Left cardiac atrium (tissue), 4 donors: ENCODE measurements at regions of chr12 and their contacts with region 1.

Region 1: DNA sequence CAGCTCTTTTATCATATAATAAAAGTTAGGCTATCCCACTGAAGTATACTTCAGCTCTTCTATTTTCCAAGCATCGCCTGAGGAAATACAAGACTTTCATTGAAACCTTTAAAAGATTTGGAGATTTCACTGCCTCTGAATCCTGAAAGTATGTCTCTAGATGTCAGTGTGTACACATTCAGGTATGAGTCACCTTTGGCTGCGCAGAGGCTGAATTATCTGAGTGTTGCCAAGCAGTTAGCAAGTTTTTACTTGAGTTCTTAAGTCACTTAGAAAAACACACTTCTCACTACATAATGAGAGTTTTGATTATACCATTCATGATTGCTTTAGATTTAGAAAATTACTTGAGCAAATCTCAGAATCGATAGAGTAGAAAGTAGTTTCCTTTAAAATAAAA is 210.3 kb downstream of the TMTC2 start:
- DNase-seq: no peak
- ATAC-seq: peak in 1 of 2 donors; percentile 66

Region 2: DNA sequence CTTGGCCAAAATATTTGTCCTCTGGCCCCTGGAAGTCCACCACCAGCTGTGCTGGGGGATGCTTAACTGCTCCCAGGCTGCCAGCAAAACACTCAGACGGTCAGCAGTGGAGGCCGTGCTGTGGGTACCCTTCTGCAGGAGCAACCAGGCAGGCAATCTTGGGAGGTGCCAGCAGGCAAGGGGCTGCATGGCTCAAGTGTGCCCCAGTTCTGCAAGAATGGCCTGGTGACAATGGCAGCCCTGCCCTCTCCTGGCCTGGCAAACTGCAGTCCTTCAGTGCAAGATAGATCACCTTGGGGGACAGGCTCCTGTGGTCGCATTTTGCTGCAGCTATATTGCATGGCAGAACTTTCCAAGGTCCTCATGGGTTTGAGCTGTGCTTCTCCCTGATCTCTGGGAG is 518.0 kb after region 1 on chr12:
- intact Hi-C with region 1: loop called in 1 of 2 experiments (anchors 10 kb)
- DNase-seq: no peak
- ATAC-seq: no peak